ENCODE measurements at regions of chr15 and their contacts with region 1.

Region 1: DNA sequence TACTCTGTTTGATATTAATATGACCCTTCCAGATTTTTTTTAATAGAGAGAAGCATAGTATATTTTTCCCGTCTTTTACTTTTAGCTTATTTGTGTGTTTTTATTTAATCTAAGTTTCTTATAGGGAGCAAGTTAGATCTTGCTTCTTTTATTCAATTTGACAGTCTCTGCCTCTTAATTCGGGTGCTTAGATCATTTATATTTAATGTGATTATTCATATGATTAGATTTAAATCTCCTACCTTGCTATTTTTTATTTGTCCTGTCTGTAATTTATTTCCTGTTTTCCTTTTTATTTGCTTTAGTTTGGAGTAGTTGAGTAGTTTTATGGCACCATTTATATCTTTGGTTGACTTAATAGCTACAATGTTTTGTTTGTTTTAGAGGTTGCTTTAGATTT is 66.1 kb downstream of the GJD2 start:
- DNase-seq: no peak
- H3K4me3 Mint-ChIP-seq: no peak overlapping the region
- H3K27ac Mint-ChIP-seq: no peak overlapping the region
- H3K4me1 Mint-ChIP-seq: peaks cover 28% of the 10 kb centered on the region
- H3K27me3 Mint-ChIP-seq: no peaks in the 10 kb centered on the region
- CTCF ChIP-seq: no peak

Region 2: GRCh38 chr15:34637305-34637704 is 51.4 kb before region 1 on chr15:
- CTCF ChIA-PET with region 1: no interaction called
- POLR2A ChIA-PET with region 1: no interaction called
- intact Hi-C with region 1: loop called (anchors 2 kb)
- DNase-seq: no peak
- H3K4me3 Mint-ChIP-seq: no peak overlapping the region
- H3K27ac Mint-ChIP-seq: no peak overlapping the region
- H3K4me1 Mint-ChIP-seq: no peaks in the 10 kb centered on the region
- H3K27me3 Mint-ChIP-seq: no peaks in the 10 kb centered on the region
- CTCF ChIP-seq: no peak

Region 3: DNA sequence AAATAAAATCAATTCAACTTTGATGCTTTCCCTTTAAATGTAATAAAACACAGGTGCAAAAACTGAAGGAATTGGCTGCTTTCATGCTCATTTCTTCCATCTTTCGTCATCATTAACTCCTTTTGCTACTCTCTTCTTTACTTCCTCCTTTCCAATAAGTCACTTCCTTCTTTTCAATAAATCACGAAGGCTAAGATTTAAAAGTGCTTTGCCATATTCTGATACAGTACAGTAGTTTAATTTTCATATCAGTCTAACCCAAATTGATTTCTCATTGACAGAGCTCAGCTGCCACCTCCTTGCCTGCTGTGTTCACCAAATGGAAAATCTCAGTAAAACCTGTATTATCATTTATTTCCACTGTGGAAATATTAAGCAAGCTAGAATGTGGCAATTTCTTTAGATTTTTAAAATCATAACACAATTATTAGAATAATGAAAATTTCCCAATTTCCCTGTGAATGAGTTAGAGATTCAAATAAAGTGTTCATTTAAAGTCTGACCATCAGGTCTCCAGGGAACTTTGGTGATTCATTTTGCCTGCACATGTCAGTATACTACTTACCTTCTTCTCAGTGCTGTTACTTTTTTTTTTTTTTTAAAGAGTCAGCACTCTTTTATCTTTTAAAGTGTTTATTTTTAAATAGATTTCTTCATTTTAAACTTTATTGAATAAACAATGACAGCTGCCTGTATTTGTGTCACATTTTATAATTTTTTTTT is 354.8 kb after region 1 on chr15:
- CTCF ChIA-PET with region 1: no interaction called
- POLR2A ChIA-PET with region 1: no interaction called
- intact Hi-C with region 1: no loop called
- DNase-seq: peak; percentile 3
- H3K4me3 Mint-ChIP-seq: no peak overlapping the region
- H3K27ac Mint-ChIP-seq: no peak overlapping the region
- H3K4me1 Mint-ChIP-seq: peaks cover 14% of the 10 kb centered on the region
- H3K27me3 Mint-ChIP-seq: no peaks in the 10 kb centered on the region
- CTCF ChIP-seq: no peak